ENCODE measurements at regions of chr7 and their contacts with region 1.

Region 1: DNA sequence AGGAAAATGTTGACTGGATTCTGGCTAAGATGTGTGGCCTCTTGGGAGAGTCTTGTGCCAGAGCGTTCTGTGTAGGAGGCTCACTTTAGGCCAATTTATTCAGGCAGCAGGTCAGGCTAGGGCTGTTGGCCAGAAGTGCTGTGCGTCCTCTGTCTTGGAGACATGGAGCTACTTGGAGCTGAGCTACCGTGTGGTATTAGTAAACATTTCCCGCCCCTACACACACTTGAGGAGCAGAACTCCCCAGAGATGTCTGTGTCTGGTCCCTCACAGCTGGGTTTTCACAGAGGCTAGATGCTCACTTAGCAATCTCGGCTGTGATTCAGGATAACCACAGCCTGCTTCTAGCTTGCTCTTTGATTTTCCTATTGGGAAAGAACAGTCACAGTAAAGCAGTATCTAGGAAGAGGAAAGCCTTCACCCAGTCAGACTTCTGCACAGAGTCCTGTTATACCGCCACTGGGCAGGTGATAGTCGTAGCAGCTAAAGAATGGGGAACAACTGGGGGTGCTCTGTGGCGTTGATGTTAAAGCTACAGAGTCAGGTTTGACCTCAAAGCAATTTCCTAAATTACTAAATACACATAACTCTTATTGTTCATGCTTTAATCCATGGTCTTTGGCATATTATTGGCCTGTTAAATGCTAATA is 86.7 kb downstream of the MDFIC start:
- DNase-seq: peak; percentile 32
- H3K4me3 Mint-ChIP-seq: peak overlapping the region; percentile 72
- H3K27ac Mint-ChIP-seq: peak overlapping the region; percentile 96
- H3K4me1 Mint-ChIP-seq: peaks cover 79% of the 10 kb centered on the region
- H3K27me3 Mint-ChIP-seq: no peaks in the 10 kb centered on the region

Region 2: DNA sequence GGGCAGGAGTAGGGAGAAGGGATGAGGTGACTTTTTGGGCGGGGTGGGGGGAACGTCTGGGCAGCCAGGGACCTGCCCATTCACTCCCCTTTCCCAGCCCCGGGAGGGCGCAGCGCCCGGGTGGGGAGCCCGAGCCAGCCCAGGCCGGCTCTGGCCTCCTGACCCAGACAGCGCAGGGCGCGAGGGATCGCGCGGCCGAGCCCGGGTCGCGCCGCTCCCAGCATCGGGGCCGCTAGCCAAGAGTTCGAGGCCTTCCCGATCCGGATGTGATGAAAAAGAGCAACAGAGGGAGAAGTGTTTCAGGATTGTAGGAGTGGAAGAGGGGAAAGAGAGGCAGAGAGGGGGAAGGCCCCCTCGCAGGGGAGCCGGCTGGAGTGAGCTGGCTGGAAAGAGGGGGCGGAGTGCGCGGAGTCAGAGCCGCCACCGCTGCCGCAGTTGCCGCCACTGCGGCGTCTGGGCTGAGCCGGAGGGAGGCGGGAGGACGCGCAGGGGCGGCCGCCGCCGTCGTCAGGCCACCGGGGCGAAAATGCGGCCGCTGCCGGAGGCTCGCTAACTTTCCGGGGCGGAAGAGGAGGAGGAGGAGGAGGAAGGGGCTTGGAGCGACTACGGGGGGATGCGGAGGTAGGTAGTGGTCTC is 86.5 kb before region 1 on chr7 and contains the start of gene MDFIC:
- CTCF ChIA-PET with region 1: interaction called, 39 read pairs
- POLR2A ChIA-PET with region 1: interaction called, 309 read pairs
- DNase-seq: peak; percentile 69
- H3K4me3 Mint-ChIP-seq: peak within 1 kb of the TSS; percentile 99
- H3K27ac Mint-ChIP-seq: peak within 1 kb of the TSS; percentile 99
- H3K4me1 Mint-ChIP-seq: peaks cover 51% of the 10 kb centered on the region
- H3K27me3 Mint-ChIP-seq: no peaks in the 10 kb centered on the region
- total RNA-seq, gene MDFIC: 85.8 to 90.7 TPM

Region 3: GRCh38 chr7:115462301-115463033 is 453.9 kb after region 1 on chr7:
- CTCF ChIA-PET with region 1: no interaction called
- POLR2A ChIA-PET with region 1: no interaction called
- DNase-seq: no peak
- H3K4me3 Mint-ChIP-seq: no peak overlapping the region
- H3K27ac Mint-ChIP-seq: no peak overlapping the region
- H3K4me1 Mint-ChIP-seq: no peaks in the 10 kb centered on the region
- H3K27me3 Mint-ChIP-seq: peaks cover 2% of the 10 kb centered on the region

Measured in activated CD4-positive, alpha-beta memory T cell treated with anti-CD3 and anti-CD28 coated beads, Interleukin-2, amount 10 ng/mL, durations not matched to agents 7 days and 5 days (primary cell).